Activated CD8-positive, alpha-beta T cell treated with anti-CD3 and anti-CD28 coated beads for 36 hours (primary cell): ENCODE measurements at regions of chr3 and their contacts with region 1.

Region 1: GRCh38 chr3:52220380-52221026 is 4.9 kb downstream of the TLR9 start:
- DNase-seq: peak; percentile 95
- ATAC-seq: peak; percentile 71
- H3K4me3 Mint-ChIP-seq: peak overlapping the region; percentile 12
- H3K27ac Mint-ChIP-seq: no peak overlapping the region
- H3K4me1 Mint-ChIP-seq: peaks cover 83% of the 10 kb centered on the region
- H3K27me3 Mint-ChIP-seq: no peaks in the 10 kb centered on the region
- CTCF ChIP-seq: peak; percentile 79

Region 2: DNA sequence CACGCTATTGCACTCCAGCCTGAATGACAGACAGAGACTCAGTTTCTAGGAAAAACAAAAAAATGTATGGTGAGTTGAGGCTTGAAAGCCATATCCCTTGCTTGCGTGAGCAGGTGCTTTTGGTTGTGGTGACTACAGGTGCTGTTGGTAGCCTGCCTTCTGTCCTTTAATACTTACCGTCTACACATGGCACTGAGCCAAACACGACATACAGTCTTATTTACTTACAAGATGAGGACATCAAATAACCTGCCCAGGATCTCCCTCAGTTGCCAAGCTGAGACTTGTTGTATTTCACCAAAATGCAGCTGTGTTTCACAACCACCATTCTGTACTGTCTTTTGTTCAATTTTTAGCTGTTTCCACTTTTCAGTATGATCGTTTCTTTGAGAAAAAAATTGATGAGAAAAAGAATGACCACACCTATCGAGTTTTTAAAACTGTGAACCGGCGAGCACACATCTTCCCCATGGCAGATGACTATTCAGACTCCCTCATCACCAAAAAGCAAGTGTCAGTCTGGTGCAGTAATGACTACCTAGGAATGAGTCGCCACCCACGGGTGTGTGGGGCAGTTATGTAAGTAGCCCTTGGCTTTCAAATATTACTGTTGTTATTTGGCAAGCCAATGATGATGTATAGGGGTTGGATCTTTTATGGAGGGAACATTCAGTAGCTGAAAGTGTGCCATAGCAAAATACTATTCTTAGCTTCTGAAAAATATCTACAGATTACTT is 16.0 kb before region 1 on chr3:
- CTCF ChIA-PET with region 1: interaction called, 71 read pairs
- POLR2A ChIA-PET with region 1: interaction called, 12 read pairs
- intact Hi-C with region 1: no loop called
- DNase-seq: peak; percentile 69
- ATAC-seq: peak; percentile 75
- H3K4me3 Mint-ChIP-seq: no peak overlapping the region
- H3K27ac Mint-ChIP-seq: peak overlapping the region; percentile 30
- H3K4me1 Mint-ChIP-seq: peaks cover 43% of the 10 kb centered on the region
- H3K27me3 Mint-ChIP-seq: no peaks in the 10 kb centered on the region
- CTCF ChIP-seq: no peak

Region 3: GRCh38 chr3:52238761-52239701 is 18.5 kb after region 1 on chr3 and contains the start of gene TWF2:
- CTCF ChIA-PET with region 1: interaction called, 198 read pairs
- POLR2A ChIA-PET with region 1: interaction called, 107 read pairs
- intact Hi-C with region 1: no loop called
- DNase-seq: peak; percentile 91
- ATAC-seq: peak; percentile 74
- H3K4me3 Mint-ChIP-seq: peak within 1 kb of the TSS; percentile 99
- H3K27ac Mint-ChIP-seq: peak within 1 kb of the TSS; percentile 97
- H3K4me1 Mint-ChIP-seq: peaks cover 67% of the 10 kb centered on the region
- H3K27me3 Mint-ChIP-seq: no peaks in the 10 kb centered on the region
- CTCF ChIP-seq: peak; percentile 30
- total RNA-seq, gene TWF2: 137 TPM

Region 4: GRCh38 chr3:52278510-52279069 is 58.1 kb after region 1 on chr3 and contains the start of gene WDR82:
- CTCF ChIA-PET with region 1: interaction called, 93 read pairs
- POLR2A ChIA-PET with region 1: interaction called, 949 read pairs
- intact Hi-C with region 1: no loop called
- DNase-seq: peak; percentile 98
- ATAC-seq: peak; percentile 72
- H3K4me3 Mint-ChIP-seq: peak within 1 kb of the TSS; percentile 99
- H3K27ac Mint-ChIP-seq: peak within 1 kb of the TSS; percentile 96
- H3K4me1 Mint-ChIP-seq: peaks cover 50% of the 10 kb centered on the region
- H3K27me3 Mint-ChIP-seq: no peaks in the 10 kb centered on the region
- CTCF ChIP-seq: peak; percentile 69
- total RNA-seq, gene WDR82: 103 to 105 TPM

Region 5: DNA sequence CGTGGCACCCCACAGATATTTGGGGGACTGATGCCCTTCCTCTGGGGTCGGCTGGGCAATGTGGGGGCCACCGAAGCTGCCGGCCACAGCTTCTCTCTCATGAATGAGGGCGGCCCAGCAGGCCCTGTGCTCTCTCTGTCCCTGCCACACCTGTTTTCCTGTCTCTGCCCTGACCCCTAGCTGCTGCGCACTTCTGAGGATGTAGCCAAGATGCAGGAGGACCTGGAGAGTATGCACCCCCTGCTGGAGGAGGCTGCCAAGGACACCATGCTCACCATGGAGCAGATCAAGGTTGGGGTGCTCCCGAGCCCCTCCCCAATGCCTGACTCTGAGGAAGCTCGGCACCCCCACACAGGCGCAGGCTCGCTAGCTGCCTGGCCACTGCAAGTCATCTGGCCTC is 164.7 kb after region 1 on chr3:
- CTCF ChIA-PET with region 1: interaction called, 14 read pairs
- POLR2A ChIA-PET with region 1: no interaction called
- intact Hi-C with region 1: no loop called
- DNase-seq: peak; percentile 59
- ATAC-seq: peak; percentile 81
- H3K4me3 Mint-ChIP-seq: no peak overlapping the region
- H3K27ac Mint-ChIP-seq: no peak overlapping the region
- H3K4me1 Mint-ChIP-seq: no peaks in the 10 kb centered on the region
- H3K27me3 Mint-ChIP-seq: no peaks in the 10 kb centered on the region
- CTCF ChIP-seq: no peak

Region 6: GRCh38 chr3:52463416-52463815 is 242.9 kb after region 1 on chr3:
- CTCF ChIA-PET with region 1: no interaction called
- POLR2A ChIA-PET with region 1: no interaction called
- intact Hi-C with region 1: no loop called
- DNase-seq: no peak
- ATAC-seq: no peak
- H3K4me3 Mint-ChIP-seq: no peak overlapping the region
- H3K27ac Mint-ChIP-seq: no peak overlapping the region
- H3K4me1 Mint-ChIP-seq: peaks cover 20% of the 10 kb centered on the region
- H3K27me3 Mint-ChIP-seq: no peaks in the 10 kb centered on the region
- CTCF ChIP-seq: no peak

Region 7: DNA sequence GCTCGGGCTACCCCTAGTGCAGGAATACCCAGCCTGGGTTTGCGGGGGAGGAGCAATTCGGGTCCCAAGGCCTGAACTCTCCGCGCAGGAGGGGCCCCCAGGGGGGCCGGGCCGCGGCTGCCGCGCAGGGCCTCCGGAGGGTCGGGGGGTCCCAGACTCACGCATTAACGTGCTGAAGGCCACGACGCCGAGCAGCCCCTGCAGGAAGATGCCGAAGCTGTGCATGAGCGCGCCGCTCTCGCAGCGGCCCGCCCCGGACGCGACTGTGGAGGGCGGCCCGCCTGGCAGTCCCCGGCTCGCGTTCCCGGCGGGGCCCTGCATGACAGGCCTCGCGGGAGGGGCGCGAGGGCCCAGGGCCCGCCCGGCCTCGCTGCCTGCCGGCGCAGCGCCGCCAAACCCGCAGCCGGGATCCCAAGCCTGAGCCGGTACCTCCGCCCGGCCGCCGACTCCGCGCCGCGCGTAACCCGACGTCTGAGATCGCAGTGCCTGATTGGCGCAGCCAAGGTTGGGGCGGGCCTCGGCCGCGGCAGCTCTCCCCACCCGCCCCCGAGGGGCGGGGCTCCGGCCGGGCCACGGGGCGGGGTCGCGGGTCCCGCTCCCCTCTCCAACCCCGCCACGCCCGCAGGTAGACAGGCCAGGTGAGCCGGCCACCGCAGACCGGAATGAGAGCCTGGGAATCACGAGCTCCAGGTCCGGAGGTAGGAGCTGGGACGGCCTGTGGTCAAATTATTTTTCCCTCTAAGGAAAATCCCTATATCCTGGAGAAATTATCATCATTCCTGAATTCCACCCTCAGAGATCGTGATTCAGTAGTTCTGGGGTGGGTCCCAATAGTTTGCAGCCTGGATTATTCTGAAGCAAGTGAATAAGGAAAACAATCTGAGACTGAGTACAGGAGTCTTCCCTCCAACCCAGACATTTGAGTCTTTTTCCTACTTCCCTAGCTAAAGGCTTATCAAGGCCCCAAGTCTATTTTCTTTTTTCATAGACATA is 676.9 kb after region 1 on chr3 and contains the start of gene STIMATE:
- CTCF ChIA-PET with region 1: no interaction called
- POLR2A ChIA-PET with region 1: no interaction called
- intact Hi-C with region 1: no loop called
- DNase-seq: peak; percentile 88
- ATAC-seq: peak; percentile 92
- H3K4me3 Mint-ChIP-seq: peak within 1 kb of the TSS; percentile 92
- H3K27ac Mint-ChIP-seq: peak within 1 kb of the TSS; percentile 31
- H3K4me1 Mint-ChIP-seq: peaks cover 46% of the 10 kb centered on the region
- H3K27me3 Mint-ChIP-seq: no peaks in the 10 kb centered on the region
- CTCF ChIP-seq: no peak
- total RNA-seq, gene STIMATE: 17.3 to 18.3 TPM